Activated B cell treated with CpG ODN at 0.5 μM for 24 hours (primary cell): ENCODE measurements at regions of chr19 and their contacts with region 1.

Region 1: GRCh38 chr19:6516659-6517291 is 14.1 kb upstream of the TNFSF9 start:
- DNase-seq: peak; percentile 92
- ATAC-seq: peak; percentile 63
- H3K4me3 Mint-ChIP-seq: peak overlapping the region; percentile 97
- H3K27ac Mint-ChIP-seq: peak overlapping the region; percentile 59
- H3K4me1 Mint-ChIP-seq: peaks cover 45% of the 10 kb centered on the region
- H3K27me3 Mint-ChIP-seq: no peaks in the 10 kb centered on the region
- CTCF ChIP-seq: peak; percentile 84

Region 2: GRCh38 chr19:6466526-6467248 is 50.1 kb before region 1 on chr19:
- CTCF ChIA-PET with region 1: no interaction called
- POLR2A ChIA-PET with region 1: no interaction called
- intact Hi-C with region 1: no loop called
- DNase-seq: no peak
- ATAC-seq: no peak
- H3K4me3 Mint-ChIP-seq: no peak overlapping the region
- H3K27ac Mint-ChIP-seq: no peak overlapping the region
- H3K4me1 Mint-ChIP-seq: peaks cover 21% of the 10 kb centered on the region
- H3K27me3 Mint-ChIP-seq: peaks cover 3% of the 10 kb centered on the region
- CTCF ChIP-seq: no peak

Region 3: GRCh38 chr19:6530386-6531161 is 13.8 kb after region 1 on chr19 and contains the start of gene TNFSF9:
- CTCF ChIA-PET with region 1: interaction called, 5 read pairs
- POLR2A ChIA-PET with region 1: interaction called, 36 read pairs
- intact Hi-C with region 1: loop called (anchors 1 kb)
- DNase-seq: peak; percentile 86
- ATAC-seq: peak; percentile 29
- H3K4me3 Mint-ChIP-seq: peak within 1 kb of the TSS; percentile 78
- H3K27ac Mint-ChIP-seq: peak within 1 kb of the TSS; percentile 72
- H3K4me1 Mint-ChIP-seq: peaks cover 64% of the 10 kb centered on the region
- H3K27me3 Mint-ChIP-seq: peaks cover 9% of the 10 kb centered on the region
- CTCF ChIP-seq: no peak
- total RNA-seq, gene TNFSF9: 6.0 and 7.1 TPM in 2 replicates

Region 4: DNA sequence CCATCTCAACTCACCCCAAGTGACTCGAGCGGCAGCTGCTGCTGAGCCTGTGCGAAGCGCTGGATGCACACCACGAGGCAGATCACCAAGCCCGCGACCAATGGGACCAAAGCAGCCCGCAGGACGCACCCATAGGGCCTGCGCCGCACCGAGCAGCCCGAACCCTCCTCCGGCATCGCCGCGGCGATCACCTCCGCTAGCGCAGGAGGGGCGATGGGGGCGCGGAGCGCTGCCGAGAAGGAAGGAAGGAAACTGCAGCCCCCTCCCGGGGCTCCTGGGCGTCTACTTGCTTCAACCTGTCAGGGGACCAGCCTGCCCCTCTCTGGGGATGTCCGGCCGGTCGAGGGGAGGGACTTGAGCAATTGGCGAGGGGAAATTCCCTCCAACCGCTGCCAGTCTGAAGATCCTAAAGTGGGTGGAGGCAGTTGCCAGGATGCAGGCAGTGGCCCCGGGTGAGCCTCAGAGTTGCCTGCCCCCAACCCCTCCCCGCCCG is 74.1 kb after region 1 on chr19 and contains the start of gene CD70:
- CTCF ChIA-PET with region 1: interaction called, 5 read pairs
- POLR2A ChIA-PET with region 1: interaction called, 26 read pairs
- intact Hi-C with region 1: loop called (anchors 1 kb)
- DNase-seq: peak; percentile 64
- ATAC-seq: peak; percentile 67
- H3K4me3 Mint-ChIP-seq: peak within 1 kb of the TSS; percentile 88
- H3K27ac Mint-ChIP-seq: peak within 1 kb of the TSS; percentile 82
- H3K4me1 Mint-ChIP-seq: peaks cover 68% of the 10 kb centered on the region
- H3K27me3 Mint-ChIP-seq: peaks cover 17% of the 10 kb centered on the region
- CTCF ChIP-seq: no peak
- total RNA-seq, gene CD70: 29.3 and 29.7 TPM in 2 replicates

Region 5: GRCh38 chr19:6639439-6639838 is 122.7 kb after region 1 on chr19:
- CTCF ChIA-PET with region 1: interaction called, 72 read pairs
- POLR2A ChIA-PET with region 1: no interaction called
- intact Hi-C with region 1: no loop called
- DNase-seq: no peak
- ATAC-seq: no peak
- H3K4me3 Mint-ChIP-seq: no peak overlapping the region
- H3K27ac Mint-ChIP-seq: no peak overlapping the region
- H3K4me1 Mint-ChIP-seq: peaks cover 11% of the 10 kb centered on the region
- H3K27me3 Mint-ChIP-seq: no peaks in the 10 kb centered on the region
- CTCF ChIP-seq: no peak

Region 6: DNA sequence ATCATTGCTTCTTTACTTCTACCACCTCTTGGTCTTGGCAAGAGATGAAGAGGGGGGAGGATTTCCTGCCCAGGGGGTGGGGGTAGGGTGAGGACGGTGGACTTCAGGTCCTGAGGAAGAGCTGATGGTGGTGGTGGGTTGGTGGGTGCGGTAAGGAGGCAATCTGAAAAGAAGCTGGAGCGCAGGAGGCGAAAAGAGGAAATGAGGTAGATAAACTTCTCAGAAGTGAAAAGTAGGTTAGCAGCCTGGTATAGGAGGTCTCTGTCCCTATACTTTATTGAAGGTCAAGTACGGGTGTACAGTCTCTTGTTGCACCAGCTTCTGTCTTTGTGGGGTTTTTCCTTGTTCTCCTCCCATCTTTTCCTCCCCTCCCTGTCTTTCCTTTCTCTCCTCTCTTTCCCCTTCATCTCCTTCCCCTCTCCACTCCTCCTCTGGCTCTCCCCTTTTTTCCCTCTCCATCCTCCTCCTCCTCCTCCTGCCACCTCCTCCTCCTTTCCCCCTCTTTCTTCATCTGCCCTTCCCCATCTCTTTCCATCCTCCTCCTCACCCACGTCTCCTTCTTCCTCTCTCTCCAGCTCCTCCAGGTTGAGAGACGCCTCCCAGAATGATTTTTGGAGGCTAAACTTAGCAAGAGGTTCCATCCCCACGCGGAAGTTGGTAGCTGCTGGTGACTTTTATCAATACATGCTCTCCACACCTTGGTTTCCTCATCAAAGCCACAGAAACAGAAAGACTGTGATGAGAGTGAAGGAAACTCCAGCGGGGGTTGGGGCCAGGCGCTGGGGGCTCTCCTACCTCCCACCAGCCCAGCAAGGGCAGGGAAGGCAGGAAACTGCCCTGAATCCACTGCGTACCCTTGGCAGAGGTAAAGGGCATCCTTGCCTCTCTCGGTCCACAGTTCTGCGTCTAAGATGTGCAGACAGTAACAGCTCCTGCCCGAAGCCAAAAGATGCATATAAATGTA is 137.9 kb after region 1 on chr19:
- CTCF ChIA-PET with region 1: no interaction called
- POLR2A ChIA-PET with region 1: no interaction called
- intact Hi-C with region 1: no loop called
- DNase-seq: no peak
- ATAC-seq: no peak
- H3K4me3 Mint-ChIP-seq: no peak overlapping the region
- H3K27ac Mint-ChIP-seq: no peak overlapping the region
- H3K4me1 Mint-ChIP-seq: peaks cover 9% of the 10 kb centered on the region
- H3K27me3 Mint-ChIP-seq: peaks cover 16% of the 10 kb centered on the region
- CTCF ChIP-seq: no peak

Region 7: DNA sequence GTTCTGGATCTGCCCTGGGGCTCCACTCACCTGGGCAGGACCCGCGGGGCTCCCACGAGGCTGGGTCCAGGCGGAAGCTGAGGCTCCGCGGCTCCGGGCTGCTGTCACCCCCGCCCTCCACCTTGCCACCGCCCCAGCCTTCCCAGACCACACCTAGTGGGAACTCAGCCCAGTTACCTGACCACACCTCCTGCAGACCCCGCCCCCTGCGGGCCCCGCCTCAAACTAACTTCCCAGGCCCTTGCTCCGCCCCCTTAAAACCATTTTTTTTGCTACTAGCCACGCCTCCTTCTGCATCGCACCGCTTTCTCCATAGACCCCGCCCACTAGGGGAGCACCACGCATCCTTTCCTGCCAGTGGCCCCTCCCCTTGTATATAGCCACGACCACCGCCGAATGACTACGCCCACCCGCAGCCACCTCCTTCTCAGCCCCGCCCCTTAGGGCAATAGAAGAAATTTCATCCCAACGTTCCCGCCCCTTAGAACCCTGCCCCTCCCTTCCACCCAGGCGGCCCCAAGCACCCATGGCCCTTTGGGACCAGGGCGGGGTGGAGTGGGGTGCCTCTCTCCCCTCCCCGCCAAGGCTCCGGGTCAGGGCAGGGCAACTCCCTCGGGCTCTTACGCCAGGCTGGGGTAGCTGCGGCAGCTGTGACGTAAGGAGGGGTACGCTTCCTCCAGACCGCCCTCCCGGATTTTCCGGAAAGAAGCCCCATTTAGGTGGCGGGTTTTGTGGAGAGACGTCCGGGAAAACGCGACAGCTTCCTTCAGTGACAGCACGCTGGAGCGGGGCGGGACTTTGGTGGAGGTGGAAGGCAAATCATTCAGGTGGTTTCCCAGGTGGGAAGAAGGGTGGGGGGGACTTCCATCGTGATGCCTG is 250.8 kb after region 1 on chr19 and contains the start of gene SH2D3A:
- CTCF ChIA-PET with region 1: interaction called, 3 read pairs
- POLR2A ChIA-PET with region 1: interaction called, 6 read pairs
- intact Hi-C with region 1: loop called (anchors 1 kb)
- DNase-seq: peak; percentile 87
- ATAC-seq: peak; percentile 73
- H3K4me3 Mint-ChIP-seq: peak within 1 kb of the TSS; percentile 88
- H3K27ac Mint-ChIP-seq: peak within 1 kb of the TSS; percentile 85
- H3K4me1 Mint-ChIP-seq: peaks cover 46% of the 10 kb centered on the region
- H3K27me3 Mint-ChIP-seq: no peaks in the 10 kb centered on the region
- CTCF ChIP-seq: no peak
- total RNA-seq, gene SH2D3A: 18.7 and 22.6 TPM in 2 replicates